ENCODE measurements at regions of chr15 and their contacts with region 1.

Region 1: DNA sequence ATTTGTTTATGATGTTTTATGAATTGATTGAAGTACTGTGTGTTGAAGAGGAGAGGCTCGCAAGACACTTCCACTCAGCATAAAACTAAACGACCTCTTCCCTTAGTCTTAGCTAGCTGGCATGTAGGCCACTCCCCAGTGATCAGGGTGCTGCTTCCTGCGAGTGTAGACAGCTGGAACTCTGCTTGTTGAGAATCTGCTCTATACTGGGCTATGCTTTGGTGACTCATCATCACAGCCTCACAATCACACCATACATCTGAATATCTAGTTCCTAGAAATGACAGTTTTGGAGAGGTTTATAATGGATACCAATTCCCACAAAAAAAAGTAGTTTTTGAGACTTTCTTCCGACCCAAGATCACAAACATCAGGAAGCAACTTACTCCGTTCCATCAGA is 1.5 kb upstream of the SLC24A5 start:
- DNase-seq: no peak
- H3K4me3 ChIP-seq: no peak overlapping the region
- H3K27ac ChIP-seq: no peak overlapping the region
- H3K4me1 ChIP-seq: no peaks in the 10 kb centered on the region
- CTCF ChIP-seq: no peak

Region 2: GRCh38 chr15:48144889-48145288 is 25.6 kb after region 1 on chr15:
- CTCF ChIA-PET with region 1: no interaction called
- POLR2A ChIA-PET with region 1: no interaction called
- intact Hi-C with region 1: loop called (anchors 1 kb)
- DNase-seq: no peak
- H3K4me3 ChIP-seq: no peak overlapping the region
- H3K27ac ChIP-seq: no peak overlapping the region
- H3K4me1 ChIP-seq: no peaks in the 10 kb centered on the region
- CTCF ChIP-seq: no peak

Measured in OCI-LY7 (cell line).